ENCODE measurements at regions of chr1 and their contacts with region 1.

Region 1: DNA sequence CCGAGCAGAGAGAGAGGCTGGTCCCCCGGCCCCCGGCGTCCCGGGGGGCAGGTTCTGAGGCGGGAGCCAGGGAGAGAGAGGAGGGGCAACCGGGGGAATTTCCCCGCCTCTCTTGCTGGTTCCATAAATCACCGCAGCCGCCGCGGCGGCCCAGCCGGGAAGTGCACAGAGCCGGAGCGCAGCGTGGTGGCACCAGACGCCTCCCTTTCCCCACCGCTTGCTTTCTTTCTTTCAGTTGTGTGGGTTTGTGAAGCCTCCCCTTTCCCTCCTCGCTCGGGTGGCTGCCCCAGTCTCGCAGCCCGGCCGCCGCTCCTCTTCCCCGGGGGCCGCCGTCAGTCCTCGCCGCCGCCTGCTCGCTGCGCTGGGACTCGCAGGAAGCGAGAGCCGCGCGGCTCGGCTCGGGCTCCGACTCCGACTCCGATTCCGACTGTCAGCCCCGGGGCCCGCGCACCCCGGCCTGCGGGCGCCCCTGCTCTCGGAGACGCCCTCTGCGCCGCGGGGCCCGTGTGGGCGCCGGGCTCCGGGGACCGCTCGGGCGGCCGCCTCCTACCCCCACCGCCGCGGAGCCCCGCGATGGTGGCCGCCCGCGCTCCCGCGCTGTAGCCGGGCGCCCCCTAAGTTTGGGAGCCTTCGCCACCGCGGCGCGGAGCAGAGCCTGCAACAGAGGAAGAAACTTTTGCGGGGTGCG is at the start of gene CACHD1:
- DNase-seq: peak; percentile 76
- ATAC-seq: peak; percentile 86 to 91 (median 88)
- H3K4me3 ChIP-seq: peak within 1 kb of the TSS; percentile 55 to 83 (median 75)
- H3K27ac ChIP-seq: peak within 1 kb of the TSS; percentile 71 to 90 (median 80)
- H3K4me1 ChIP-seq: peaks cover 0 to 41% (median 18%) of the 10 kb centered on the region in 9 donors
- H3K27me3 ChIP-seq: peaks cover 0 to 52% (median 4%) of the 10 kb centered on the region in 7 donors
- CTCF ChIP-seq: peak; percentile 17 to 71 (median 51)
- total RNA-seq, gene CACHD1: 2.1 to 4.2 (median 2.4) TPM

Region 2: GRCh38 chr1:64514197-64514765 is 44.2 kb after region 1 on chr1:
- intact Hi-C with region 1: loop called in 3 of 10 experiments (anchors 5 kb)
- DNase-seq: no peak
- ATAC-seq: peak in 7 of 8 donors; percentile 6 to 59 (median 34)
- H3K4me3 ChIP-seq: peak overlapping the region in 5 of 10 donors; percentile 3 to 12 (median 8)
- H3K27ac ChIP-seq: peak overlapping the region; percentile 29 to 77 (median 62)
- H3K4me1 ChIP-seq: peaks cover 0 to 81% (median 63%) of the 10 kb centered on the region in 9 donors
- H3K27me3 ChIP-seq: no peaks in the 10 kb centered on the region
- CTCF ChIP-seq: no peak

Region 3: GRCh38 chr1:64527165-64527564 is 57.0 kb after region 1 on chr1:
- intact Hi-C with region 1: no loop called
- DNase-seq: no peak
- ATAC-seq: no peak
- H3K4me3 ChIP-seq: no peak overlapping the region
- H3K27ac ChIP-seq: no peak overlapping the region
- H3K4me1 ChIP-seq: peaks cover 0 to 19% (median 12%) of the 10 kb centered on the region in 9 donors
- H3K27me3 ChIP-seq: no peaks in the 10 kb centered on the region
- CTCF ChIP-seq: no peak

Region 4: DNA sequence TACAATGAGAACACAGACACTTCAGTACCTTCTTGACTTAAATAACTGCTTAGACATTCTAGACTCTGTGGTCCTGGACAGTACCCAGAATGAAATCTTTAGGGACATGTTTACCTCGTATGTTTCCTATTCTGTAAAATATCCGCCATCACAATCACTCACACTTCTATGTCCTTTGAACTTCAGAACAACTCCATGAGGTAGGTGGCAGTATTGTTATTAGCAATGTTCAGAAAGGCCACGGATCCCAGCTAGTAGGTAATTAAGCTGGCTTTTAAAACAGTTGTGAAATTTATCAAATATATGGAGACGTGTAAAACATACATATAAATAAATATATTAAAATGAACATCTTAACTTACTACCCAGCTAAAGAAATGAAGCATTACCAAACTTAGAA is 83.2 kb after region 1 on chr1:
- intact Hi-C with region 1: loop called in 3 of 10 experiments (anchors 5 to 10 kb)
- DNase-seq: no peak
- ATAC-seq: no peak
- H3K4me3 ChIP-seq: no peak overlapping the region
- H3K27ac ChIP-seq: no peak overlapping the region
- H3K4me1 ChIP-seq: peaks cover 0 to 24% (median 6%) of the 10 kb centered on the region in 9 donors
- H3K27me3 ChIP-seq: no peaks in the 10 kb centered on the region
- CTCF ChIP-seq: peak in 4 of 9 donors; percentile 28 to 38 (median 30)

Region 5: GRCh38 chr1:64645741-64646140 is 175.6 kb after region 1 on chr1:
- intact Hi-C with region 1: loop called in 2 of 10 experiments (anchors 5 to 10 kb)
- DNase-seq: no peak
- ATAC-seq: no peak
- H3K4me3 ChIP-seq: no peak overlapping the region
- H3K27ac ChIP-seq: no peak overlapping the region
- H3K4me1 ChIP-seq: peaks cover 0 to 4% (median 0%) of the 10 kb centered on the region in 9 donors
- H3K27me3 ChIP-seq: no peaks in the 10 kb centered on the region
- CTCF ChIP-seq: no peak

Region 6: DNA sequence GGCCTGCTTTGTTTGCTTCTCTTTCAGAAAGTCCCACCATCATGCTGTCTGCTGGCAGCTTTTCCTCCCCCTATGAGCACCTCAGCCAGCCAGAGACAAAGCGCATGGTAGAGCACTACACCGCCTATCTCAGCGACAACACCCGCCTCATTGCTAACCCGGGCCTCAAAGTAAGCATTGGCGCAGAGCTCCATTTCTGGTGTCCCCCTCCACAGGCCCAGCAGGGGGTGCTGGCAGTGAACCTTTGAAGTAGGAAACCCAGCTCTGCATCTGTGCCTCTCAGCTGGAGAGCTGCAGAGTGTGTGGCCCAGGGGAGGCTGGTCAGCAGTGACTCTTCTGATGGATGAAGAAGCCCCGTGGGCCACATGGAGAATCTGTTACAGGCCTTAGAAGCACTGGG is 193.5 kb after region 1 on chr1:
- intact Hi-C with region 1: loop called in 3 of 10 experiments (anchors 5 to 10 kb)
- DNase-seq: no peak
- ATAC-seq: peak in 1 of 8 donors; percentile 15
- H3K4me3 ChIP-seq: no peak overlapping the region
- H3K27ac ChIP-seq: no peak overlapping the region
- H3K4me1 ChIP-seq: peaks cover 0 to 6% (median 0%) of the 10 kb centered on the region in 9 donors
- H3K27me3 ChIP-seq: no peaks in the 10 kb centered on the region
- CTCF ChIP-seq: peak in 4 of 9 donors; percentile 11 to 20 (median 14)

Region 7: DNA sequence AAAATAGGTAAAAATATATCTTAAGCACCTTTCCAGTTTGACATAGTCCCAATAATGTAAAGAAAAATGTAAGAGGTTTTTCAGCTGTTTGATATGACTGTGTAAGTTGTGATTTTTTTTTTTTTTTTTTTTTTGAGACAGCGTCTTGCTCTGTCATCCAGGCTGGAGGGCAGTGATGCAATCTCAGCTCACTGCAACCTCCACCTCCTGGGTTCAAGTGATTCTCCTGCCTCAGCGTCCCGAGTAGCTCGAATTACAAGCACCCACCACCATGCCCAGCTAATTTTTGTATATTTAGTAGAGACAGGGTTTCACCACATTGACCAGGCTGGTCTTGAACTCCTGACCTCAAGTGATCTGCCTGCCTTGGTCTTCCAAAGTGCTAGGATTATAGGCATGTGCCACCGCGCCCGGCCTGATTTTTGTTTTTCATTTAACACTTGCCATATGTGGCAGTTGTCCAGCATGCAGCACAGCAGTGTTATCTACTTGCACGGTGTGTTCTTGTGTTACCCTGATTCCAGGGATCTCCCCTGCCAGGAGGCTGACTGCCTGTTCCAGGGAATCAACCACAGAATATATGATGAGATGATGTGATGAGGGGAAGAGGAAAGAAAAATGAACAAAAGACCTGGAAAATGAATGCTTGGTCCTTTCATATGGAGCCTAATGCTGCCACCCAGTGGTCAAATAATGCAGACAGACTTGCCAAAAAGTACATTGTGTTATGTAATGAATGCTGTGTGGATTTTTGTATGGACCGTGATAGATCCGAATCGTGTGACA is 353.8 kb after region 1 on chr1:
- intact Hi-C with region 1: loop called in 1 of 10 experiments (anchors 10 kb)
- DNase-seq: peak in 1 of 2 donors; percentile 77
- ATAC-seq: peak; percentile 53 to 82 (median 68)
- H3K4me3 ChIP-seq: peak overlapping the region in 1 of 10 donors; percentile 13
- H3K27ac ChIP-seq: no peak overlapping the region
- H3K4me1 ChIP-seq: peaks cover 0 to 16% (median 5%) of the 10 kb centered on the region in 9 donors
- H3K27me3 ChIP-seq: no peaks in the 10 kb centered on the region
- CTCF ChIP-seq: peak; percentile 60 to 90 (median 87)

Measured in heart right ventricle (tissue), 16 donors.